ENCODE measurements at regions of chr7 and their contacts with region 1.

Region 1: DNA sequence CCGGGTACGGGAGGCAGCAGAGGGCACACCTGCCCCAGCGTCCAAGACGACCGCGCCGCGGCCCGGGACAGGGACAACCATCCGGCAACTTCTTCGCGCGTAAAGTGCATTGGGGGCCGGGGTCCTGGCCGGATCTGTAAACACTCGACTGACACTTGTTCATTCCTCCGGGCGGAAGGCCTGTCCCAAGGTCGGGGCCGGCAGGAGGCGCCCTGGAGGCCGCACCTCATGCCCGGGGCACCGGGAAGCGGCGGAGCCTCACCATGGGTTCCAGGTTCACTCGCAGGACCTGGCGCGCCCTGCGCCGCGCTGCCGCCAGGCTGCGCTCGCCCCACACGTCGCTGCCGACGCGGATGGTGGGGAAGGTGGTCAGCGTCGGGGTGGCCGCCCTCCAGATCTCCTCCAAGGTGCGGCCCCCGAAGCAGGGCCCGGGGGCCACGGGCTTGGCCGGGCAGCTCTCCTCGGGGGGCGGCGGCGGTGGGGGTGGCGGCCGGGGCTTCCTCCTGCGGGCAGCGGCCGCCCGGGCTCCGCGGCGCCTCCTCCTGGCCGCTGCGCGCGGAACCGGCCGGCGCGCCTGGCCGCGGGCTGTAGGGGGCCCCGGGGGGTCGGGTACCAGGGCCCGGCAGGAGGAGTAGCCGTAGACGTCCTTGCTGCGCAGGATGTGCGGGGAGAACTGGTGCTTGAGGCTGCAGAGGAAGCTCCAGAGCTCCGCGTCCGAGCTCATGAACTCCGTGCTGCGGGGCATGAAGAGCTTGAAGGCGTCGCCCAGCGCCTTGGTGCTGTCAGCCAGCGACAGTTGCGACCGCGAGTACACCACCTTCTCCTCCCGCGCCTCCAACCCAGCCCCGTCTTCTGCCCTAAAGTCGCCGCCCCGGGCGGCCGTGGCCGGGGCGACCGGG is 746 bp downstream of the CCDC71L start:
- DNase-seq: peak; percentile 81 to 93
- ATAC-seq: peak; percentile 83
- H3K4me3 ChIP-seq: peak overlapping the region; percentile 56 to 79
- H3K27ac ChIP-seq: peak overlapping the region; percentile 58 to 96
- H3K4me1 ChIP-seq: peaks cover 0 to 2% of the 10 kb centered on the region in 2 donors
- H3K27me3 ChIP-seq: no peaks in the 10 kb centered on the region

Region 2: GRCh38 chr7:106176414-106177299 is 483.6 kb before region 1 on chr7:
- intact Hi-C with region 1: loop called (anchors 10 kb)
- DNase-seq: peak; percentile 87 to 95
- ATAC-seq: peak; percentile 93
- H3K4me3 ChIP-seq: no peak overlapping the region
- H3K27ac ChIP-seq: no peak overlapping the region
- H3K4me1 ChIP-seq: no peaks in the 10 kb centered on the region
- H3K27me3 ChIP-seq: no peaks in the 10 kb centered on the region

Region 3: DNA sequence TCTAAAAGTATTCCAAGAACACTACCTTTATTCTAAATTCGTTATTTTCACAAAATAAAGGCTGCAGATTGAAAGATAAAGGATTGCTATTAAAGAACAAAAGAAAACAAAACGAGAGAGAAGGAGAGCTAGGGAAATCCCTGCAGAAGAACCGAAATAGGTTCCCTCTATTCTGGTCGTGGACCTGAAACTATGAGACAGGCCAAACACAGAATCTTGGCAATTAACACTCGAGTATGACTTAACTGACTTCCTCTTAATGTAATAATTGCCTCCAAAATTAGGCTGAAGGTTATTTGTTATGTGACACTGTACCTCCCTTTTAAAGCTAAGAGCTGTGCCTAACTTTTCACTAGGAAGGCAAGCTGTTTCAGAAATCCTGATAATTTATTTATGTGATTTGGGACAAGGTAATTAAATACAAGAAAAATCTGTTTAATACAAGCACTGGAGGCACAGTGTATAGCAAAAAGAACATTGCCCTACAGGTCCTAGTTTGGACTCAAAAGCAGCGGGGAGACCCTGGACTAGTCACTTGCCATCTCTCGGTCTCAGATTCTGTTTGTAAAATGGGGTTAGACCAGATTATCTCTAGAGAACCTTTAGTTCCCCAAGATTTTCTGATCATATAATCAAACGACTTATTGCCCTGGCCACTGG is 387.1 kb before region 1 on chr7:
- intact Hi-C with region 1: loop called in 1 of 2 experiments (anchors 10 kb)
- DNase-seq: no peak
- ATAC-seq: no peak
- H3K4me3 ChIP-seq: no peak overlapping the region
- H3K27ac ChIP-seq: no peak overlapping the region
- H3K4me1 ChIP-seq: no peaks in the 10 kb centered on the region
- H3K27me3 ChIP-seq: no peaks in the 10 kb centered on the region

Region 4: GRCh38 chr7:106704000-106704840 is 44.0 kb after region 1 on chr7:
- intact Hi-C with region 1: no loop called
- DNase-seq: no peak
- ATAC-seq: no peak
- H3K4me3 ChIP-seq: no peak overlapping the region
- H3K27ac ChIP-seq: no peak overlapping the region
- H3K4me1 ChIP-seq: no peaks in the 10 kb centered on the region
- H3K27me3 ChIP-seq: no peaks in the 10 kb centered on the region

Region 5: DNA sequence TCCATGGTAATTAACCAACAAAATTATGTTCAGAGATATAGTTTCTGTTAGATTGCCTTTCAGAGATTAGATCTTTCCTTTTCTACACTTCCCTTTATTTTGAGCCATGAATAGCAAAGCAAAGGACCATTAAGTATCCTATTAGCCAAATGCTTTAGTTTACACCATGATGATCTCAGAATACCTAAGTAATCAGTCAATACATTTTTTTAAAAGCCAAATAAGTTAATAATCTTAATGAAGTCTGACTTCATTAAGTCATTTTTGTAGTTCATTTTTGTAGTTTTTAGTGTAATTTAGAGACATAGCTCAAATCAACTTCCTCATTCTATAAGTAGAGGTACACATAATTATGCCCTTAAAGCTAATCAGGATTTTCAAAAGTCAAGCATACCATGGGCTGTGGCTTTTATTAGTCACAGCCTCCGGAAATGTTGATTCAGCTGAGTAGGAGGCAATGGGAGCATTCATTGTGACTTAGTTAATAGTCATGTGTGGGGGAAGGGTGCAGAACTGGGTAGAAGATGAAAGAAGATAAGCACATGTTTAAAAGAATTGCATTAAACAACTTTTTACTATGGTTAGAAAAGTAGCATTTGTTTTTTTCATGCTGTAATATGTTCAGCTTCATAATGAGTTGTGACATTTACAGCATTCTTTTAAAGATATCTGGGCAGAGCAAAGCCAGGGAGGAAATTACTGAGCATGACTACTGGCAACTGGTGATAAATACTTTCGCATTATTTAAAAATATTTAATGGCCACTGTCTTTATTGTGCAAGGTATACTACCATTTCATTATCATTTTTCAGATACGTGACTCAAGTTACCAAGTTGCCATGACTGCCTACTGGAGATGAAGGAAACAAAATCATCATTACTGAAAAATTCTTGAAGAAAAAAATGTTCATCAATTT is 58.0 kb after region 1 on chr7:
- intact Hi-C with region 1: loop called in 1 of 2 experiments (anchors 5 kb)
- DNase-seq: no peak
- ATAC-seq: no peak
- H3K4me3 ChIP-seq: no peak overlapping the region
- H3K27ac ChIP-seq: no peak overlapping the region
- H3K4me1 ChIP-seq: no peaks in the 10 kb centered on the region
- H3K27me3 ChIP-seq: no peaks in the 10 kb centered on the region

Region 6: DNA sequence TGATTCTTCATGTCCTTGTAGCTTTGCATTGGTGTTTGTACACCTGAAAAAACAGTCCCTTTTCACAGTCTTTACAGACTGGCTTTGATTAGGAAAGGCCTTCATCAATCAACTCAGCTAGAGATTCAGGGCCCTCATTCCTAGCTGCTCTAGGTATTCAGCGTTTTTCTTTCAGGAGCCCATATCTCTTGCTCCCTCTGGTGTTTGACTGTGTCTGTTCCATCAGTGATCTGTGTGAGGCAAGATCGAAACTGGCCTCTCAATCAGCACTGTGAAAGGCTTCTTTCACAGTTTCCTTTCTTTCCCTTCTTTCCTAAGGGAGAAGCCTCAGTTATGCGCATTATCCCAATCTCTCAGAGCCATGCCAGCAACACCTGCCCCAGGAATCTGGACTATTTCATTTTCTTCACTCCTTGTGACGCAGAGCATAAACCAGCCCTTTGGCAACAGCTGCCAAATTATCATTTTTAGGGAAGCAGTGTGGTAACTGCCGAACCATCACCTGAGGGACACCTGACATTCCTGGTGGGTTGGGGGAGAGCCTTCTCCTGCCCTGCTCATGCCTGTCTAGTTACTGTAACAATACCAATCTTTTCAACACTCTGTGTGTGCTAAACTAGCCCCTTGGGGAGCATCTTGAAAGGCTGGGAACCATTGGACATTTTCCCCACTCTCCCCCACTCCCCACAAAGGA is 76.4 kb after region 1 on chr7:
- intact Hi-C with region 1: loop called (anchors 2 to 5 kb)
- DNase-seq: no peak
- ATAC-seq: peak; percentile 75
- H3K4me3 ChIP-seq: no peak overlapping the region
- H3K27ac ChIP-seq: no peak overlapping the region
- H3K4me1 ChIP-seq: peaks cover 0 to 3% of the 10 kb centered on the region in 2 donors
- H3K27me3 ChIP-seq: no peaks in the 10 kb centered on the region

Region 7: DNA sequence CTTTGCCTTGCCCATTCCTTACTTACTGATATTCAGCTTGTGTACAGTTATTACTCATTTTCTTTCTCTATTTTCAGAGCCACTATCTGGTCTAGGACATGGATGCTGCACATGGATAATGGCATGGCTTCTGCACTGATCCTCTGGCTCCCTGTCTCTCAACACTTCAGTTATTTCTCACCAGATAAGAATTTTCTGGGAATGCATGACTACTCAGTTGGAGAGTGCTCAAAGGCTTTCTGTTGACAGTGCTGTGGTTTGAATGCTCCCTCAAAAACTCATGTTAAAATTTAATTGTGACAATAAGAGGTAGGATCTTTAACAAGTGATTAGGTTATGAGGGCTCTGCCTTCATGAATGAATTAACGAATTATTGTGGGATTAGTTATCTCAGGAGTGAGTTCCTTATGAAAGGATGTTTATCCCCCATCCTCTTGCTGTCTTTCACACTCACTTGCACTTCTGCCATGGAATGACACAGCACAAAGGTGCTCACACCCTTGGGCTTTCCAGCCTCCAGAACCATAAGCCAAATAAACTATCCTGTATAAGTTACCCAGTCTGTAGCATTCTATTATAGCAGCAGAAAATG is 188.7 kb after region 1 on chr7:
- intact Hi-C with region 1: no loop called
- DNase-seq: no peak
- ATAC-seq: no peak
- H3K4me3 ChIP-seq: no peak overlapping the region
- H3K27ac ChIP-seq: no peak overlapping the region
- H3K4me1 ChIP-seq: no peaks in the 10 kb centered on the region
- H3K27me3 ChIP-seq: no peaks in the 10 kb centered on the region

Region 8: DNA sequence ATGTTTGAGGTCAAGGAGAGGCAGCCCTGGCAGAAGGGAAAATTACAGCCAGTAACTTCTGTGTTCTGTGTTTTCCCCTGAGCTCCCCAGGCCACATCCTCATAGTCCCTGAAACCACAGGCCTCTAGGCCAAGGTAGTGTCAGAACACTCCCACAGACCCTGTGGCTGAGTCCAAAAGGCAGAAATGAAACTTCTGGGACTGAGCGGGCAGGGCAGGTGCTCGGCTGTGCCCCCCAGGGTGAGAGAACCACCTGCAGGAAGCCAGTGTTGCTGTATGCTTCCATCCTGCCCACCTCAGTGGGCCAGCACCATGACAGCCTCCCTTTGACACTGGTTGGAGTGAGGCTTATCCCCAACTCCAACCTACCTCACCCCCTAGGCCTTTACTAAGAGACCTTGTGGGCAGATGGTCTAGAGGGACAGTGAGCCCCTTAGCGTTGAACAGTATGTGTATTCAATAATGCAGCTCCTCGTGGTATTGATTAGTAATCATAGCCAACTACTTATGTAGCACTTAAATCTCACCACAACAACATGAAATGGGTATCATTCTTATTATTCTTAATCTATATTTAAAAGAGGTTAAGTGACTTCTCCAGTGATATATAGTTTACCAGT is 235.1 kb after region 1 on chr7:
- intact Hi-C with region 1: no loop called
- DNase-seq: no peak
- ATAC-seq: no peak
- H3K4me3 ChIP-seq: no peak overlapping the region
- H3K27ac ChIP-seq: no peak overlapping the region
- H3K4me1 ChIP-seq: no peaks in the 10 kb centered on the region
- H3K27me3 ChIP-seq: no peaks in the 10 kb centered on the region

Region 9: GRCh38 chr7:107168233-107169119 is 508.3 kb after region 1 on chr7 and contains the start of gene HBP1:
- intact Hi-C with region 1: loop called in 1 of 2 experiments (anchors 5 kb)
- DNase-seq: peak; percentile 98 to 100
- ATAC-seq: peak; percentile 96
- H3K4me3 ChIP-seq: peak within 1 kb of the TSS; percentile 92 to 98
- H3K27ac ChIP-seq: peak within 1 kb of the TSS; percentile 95 to 97
- H3K4me1 ChIP-seq: peaks cover 0 to 2% of the 10 kb centered on the region in 2 donors
- H3K27me3 ChIP-seq: no peaks in the 10 kb centered on the region
- total RNA-seq, gene HBP1: 51.8 to 78.7 TPM

Measured in aorta (tissue), 5 donors.